Dorsolateral prefrontal cortex (tissue), 120 donors: ENCODE measurements at regions of chr4 and their contacts with region 1.

Region 1: DNA sequence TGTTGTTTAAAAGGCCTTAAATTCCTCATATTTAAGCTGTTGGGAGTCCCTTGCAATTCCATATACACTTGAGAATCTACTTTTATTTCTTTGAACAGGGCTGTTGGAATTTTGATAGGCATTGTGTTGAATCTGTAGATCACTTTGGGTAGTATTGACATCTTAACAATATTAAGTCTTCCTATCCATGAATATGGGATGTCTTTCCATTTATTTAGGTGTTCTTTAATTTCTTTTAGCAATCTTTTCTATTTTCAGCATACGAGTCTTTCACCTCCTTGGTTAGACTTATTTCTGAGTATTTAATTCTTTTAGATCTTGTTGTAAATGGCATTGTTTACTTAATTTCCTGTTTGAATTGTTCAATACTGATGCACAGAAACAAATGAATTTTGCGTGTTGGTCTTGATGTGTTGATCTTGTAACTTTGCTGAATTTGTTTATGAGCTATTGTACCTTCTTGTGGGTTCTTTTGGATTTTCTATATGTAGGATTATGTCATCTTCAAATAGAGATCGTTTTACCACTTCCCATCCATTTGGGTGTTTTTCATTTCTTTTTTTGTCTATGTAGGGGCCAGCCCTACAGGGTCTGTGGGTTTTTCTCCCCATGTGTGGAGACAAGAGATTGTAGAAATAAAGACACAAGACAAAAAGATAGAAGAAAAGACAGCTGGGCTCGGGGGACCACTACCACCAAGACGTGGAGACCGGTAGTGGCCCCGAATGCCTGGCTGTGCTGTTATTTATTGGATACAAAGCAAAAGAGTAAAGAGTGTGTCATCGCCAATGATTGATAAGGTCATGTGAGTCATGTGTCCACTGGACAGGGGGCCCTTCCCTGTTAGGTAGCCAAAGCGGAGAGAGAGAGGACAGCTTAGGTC is 18.2 kb upstream of the CTBP1 start:
- DNase-seq: no peak
- H3K4me3 ChIP-seq: no peak overlapping the region
- H3K27ac ChIP-seq: no peak overlapping the region
- H3K27me3 ChIP-seq: no peaks in the 10 kb centered on the region
- CTCF ChIP-seq: no peak

Region 2: GRCh38 chr4:1130316-1131186 is 136.6 kb before region 1 on chr4:
- intact Hi-C with region 1: loop called (anchors 2 to 5 kb)
- DNase-seq: peak in 9 of 10 donors; percentile 54 to 80 (median 73)
- H3K4me3 ChIP-seq: peak overlapping the region in 2 of 59 donors; percentile 26 to 33
- H3K27ac ChIP-seq: peak overlapping the region in 2 of 59 donors; percentile 4
- H3K27me3 ChIP-seq: no peaks in the 10 kb centered on the region
- CTCF ChIP-seq: peak; percentile 89 to 100 (median 99)

Region 3: DNA sequence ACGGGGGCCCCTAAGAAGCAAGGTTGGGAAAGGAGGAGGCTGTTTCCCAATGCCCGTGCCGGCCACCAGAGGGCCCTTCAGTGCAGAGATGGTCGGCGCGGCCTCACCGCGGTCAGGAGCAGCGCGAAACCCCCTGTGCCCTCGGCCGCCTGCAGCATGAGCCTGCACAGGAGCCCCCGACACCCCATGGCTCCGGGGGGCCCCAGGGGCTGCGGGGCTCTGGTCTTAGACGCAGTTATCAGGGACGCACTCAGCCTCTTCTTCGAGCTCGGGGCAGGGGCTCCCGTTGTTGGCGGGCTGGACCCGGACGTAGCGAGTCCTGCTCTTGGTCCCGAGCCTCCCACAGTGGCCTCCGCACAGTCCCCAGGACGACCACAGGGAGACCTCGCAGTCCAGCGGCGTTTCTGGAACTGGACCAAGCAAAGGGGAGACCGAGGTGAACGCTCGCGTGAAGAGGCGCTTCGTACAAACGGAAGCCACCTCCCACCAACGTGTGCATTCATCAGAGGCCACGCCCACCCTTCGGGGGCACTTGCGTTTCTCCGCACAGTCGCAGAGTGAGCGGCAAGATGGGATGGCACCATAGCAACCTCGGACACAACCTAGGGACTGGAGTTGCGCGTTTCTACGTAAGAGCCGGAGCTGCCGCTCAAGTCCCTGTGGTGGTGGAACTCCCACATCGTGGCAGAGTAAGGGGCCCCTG is 99.7 kb before region 1 on chr4:
- intact Hi-C with region 1: loop called in 1 of 2 experiments (anchors 2 kb)
- DNase-seq: peak in 9 of 10 donors; percentile 71 to 86 (median 77)
- H3K4me3 ChIP-seq: peak overlapping the region; percentile 49 to 98 (median 68)
- H3K27ac ChIP-seq: peak overlapping the region in 2 of 59 donors; percentile 21 to 74
- H3K27me3 ChIP-seq: peaks cover 0 to 35% (median 27%) of the 10 kb centered on the region in 45 donors
- CTCF ChIP-seq: peak; percentile 65 to 96 (median 91)

Region 4: DNA sequence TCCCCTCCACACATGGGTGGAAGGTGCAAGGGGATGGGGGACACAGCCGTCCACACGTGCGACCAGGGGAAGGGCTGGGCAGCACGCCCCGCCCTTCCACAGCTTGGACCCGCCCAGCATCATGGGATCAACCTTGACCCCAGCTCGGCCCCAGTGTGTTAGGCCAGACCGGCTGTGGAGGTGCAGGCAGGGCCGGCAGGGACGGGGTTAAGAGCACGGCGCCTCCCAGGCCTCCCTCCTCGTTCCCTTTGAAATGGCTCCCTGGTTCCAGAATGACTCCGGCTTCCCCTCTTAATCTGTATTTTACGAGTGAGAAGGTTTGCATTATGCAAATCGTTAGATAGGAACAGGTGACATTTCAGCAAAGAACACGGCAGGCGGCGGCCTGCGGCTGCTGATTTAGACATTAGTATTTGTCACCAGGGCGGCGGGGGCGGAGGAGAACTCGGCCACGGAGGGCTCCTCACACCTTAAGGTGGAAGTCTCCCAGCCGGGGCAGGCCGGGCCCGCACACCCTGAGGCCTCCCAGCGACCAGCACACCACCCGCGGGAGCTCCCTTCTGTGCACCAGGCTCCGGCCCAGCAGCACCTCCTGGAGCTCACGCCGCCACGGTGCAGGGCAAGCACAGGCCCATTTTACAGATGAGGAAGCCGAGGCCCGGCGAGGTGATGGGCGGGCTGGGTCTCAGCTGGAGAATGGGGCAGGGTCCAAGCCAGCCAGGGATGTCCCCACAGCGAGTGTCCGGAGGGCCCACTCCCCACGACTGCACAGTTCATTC is 300.9 kb after region 1 on chr4:
- intact Hi-C with region 1: no loop called
- DNase-seq: no peak
- H3K4me3 ChIP-seq: no peak overlapping the region
- H3K27ac ChIP-seq: no peak overlapping the region
- H3K27me3 ChIP-seq: peaks cover 0 to 51% (median 31%) of the 10 kb centered on the region in 45 donors
- CTCF ChIP-seq: no peak